ENCODE measurements at regions of chr17 and their contacts with region 1.

Region 1: GRCh38 chr17:38674749-38675615 is at the start of gene EPOP:
- DNase-seq: peak; percentile 64 to 88 (median 76)
- ATAC-seq: peak; percentile 85 to 87
- H3K4me3 Mint-ChIP-seq: peak within 1 kb of the TSS; percentile 63 to 84 (median 70)
- H3K27ac Mint-ChIP-seq: peak within 1 kb of the TSS in 5 of 10 donors; percentile 0 to 64 (median 27)
- H3K4me1 Mint-ChIP-seq: peaks cover 10 to 31% (median 25%) of the 10 kb centered on the region in 4 donors
- H3K27me3 Mint-ChIP-seq: peaks cover 11 to 32% (median 28%) of the 10 kb centered on the region in 5 donors
- polyA plus RNA-seq, gene EPOP: 0.04 to 0.10 TPM in 2 of 3 donors, not detected in the other

Region 2: GRCh38 chr17:38735161-38735997 is 60.4 kb after region 1 on chr17:
- POLR2A ChIA-PET with region 1: interaction called, 30 read pairs
- DNase-seq: peak; percentile 55 to 88 (median 76)
- ATAC-seq: peak; percentile 34 to 47
- H3K4me3 Mint-ChIP-seq: peak overlapping the region in 1 of 10 donors; percentile 11
- H3K27ac Mint-ChIP-seq: peak overlapping the region in 1 of 10 donors; percentile 59
- H3K4me1 Mint-ChIP-seq: peaks cover 21 to 46% (median 42%) of the 10 kb centered on the region in 4 donors
- H3K27me3 Mint-ChIP-seq: no peaks in the 10 kb centered on the region

Measured in naive thymus-derived CD8-positive, alpha-beta T cell (primary cell).